Activated B cell treated with CpG ODN at 0.5 μM for 24 hours (primary cell): ENCODE measurements at regions of chr3 and their contacts with region 1.

Region 1: DNA sequence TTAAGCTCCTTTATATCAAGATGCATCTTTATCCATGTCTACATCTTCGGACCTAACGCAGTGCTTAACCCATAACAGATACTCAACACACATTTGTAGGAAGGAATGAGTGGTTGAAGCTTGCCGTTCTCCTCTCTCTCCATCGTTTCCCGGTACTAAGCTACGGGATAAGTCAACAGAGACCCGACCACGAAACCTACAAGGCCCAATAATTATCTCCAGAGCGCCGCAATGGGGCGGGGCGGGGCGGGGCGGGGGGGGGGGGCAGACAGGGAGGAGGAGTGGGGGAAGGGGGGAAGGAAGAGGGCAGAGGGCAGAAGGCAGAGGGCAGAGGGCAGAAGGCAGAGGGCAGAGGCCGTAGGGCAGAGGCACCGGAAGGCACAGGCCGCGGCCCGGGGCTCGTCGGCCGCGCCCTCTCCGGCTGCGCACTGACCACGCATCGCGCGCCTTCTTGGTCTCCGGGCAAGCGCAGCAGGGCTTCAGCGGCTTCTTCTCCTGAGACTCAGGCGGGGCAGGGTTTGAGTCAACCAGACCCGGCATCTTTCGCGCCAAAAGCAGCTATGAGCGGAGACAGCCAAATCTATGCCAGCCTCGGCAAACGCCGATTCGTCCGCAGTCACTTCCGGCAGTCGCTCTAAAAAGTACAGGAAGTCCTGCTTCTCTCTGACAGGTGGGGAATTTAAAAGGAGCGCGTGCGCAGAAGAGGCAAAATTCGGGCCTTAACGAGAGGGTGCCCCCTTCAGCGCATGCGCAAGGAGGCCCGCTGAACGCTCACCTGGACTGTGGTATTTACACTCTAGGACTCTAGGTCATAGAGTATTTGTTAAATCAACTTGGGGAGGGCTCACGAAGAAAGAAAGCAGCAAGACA is at the start of gene COX17:
- DNase-seq: peak; percentile 87
- ATAC-seq: peak; percentile 83
- H3K4me3 Mint-ChIP-seq: peak within 1 kb of the TSS; percentile 96
- H3K27ac Mint-ChIP-seq: peak within 1 kb of the TSS; percentile 98
- H3K4me1 Mint-ChIP-seq: peaks cover 28% of the 10 kb centered on the region
- H3K27me3 Mint-ChIP-seq: no peaks in the 10 kb centered on the region
- CTCF ChIP-seq: no peak
- total RNA-seq, gene COX17: 58.8 and 58.9 TPM in 2 replicates

Region 2: DNA sequence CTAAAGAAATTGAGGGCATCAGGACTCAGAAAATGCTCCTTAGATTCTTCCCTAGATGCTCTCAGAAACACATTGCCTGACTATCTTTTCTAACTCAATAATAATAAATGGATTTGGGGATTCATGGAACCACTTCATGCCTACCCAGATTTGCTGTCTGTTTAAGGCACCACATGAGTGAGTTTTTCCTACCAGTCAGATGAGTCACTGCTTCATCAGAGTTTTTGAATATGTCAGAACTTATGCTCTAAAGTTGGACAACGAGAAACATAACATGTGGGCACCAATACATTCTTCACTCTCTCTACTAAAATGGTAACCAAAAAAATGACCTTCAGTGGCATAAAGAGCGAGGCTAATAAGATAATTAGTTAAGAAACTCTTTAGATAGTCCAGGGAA is 1832.3 kb before region 1 on chr3:
- CTCF ChIA-PET with region 1: no interaction called
- POLR2A ChIA-PET with region 1: no interaction called
- intact Hi-C with region 1: no loop called
- DNase-seq: no peak
- ATAC-seq: no peak
- H3K4me3 Mint-ChIP-seq: no peak overlapping the region
- H3K27ac Mint-ChIP-seq: no peak overlapping the region
- H3K4me1 Mint-ChIP-seq: no peaks in the 10 kb centered on the region
- H3K27me3 Mint-ChIP-seq: no peaks in the 10 kb centered on the region
- CTCF ChIP-seq: no peak

Region 3: DNA sequence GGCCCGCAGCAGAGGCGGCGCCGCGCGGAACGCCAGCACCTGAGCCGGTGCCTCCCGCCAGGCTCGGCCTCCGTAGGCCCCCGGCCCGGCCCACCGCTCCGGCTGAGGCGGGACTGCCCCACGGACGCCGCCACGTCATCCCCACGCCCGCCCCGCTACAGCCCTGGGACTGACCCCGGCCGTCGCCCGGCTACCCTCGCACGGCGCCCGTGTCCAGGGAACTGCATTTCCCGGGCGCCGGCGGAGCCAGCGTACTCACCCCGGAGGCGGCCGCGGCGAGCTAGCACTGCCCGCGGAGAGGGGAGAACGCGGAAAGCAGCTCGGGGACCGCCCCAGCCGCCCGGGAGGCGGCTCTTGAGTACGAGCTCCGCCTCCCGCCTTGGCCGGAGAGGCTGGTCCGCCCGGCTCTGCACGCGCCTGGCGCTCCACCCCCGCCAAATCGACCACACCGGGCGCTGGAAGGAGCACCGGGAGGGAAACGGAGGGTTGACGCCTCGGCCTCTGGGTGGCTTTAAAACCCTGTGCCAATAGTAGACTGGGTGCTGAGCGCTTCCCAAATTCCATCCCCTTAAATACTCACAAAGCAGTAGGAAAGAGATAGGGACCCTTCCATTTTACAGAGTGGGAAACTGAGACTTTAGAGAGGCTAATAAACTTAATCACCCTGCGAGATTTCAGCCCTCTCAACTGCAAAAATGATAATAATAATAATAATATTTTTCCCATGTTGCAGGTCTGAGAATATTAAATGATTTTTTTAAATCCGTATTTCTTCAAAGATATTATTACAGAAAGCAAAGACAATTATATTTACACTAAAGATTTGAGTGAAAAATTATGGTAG is 436.2 kb before region 1 on chr3 and contains the start of gene B4GALT4:
- CTCF ChIA-PET with region 1: interaction called, 13 read pairs
- POLR2A ChIA-PET with region 1: interaction called, 3 read pairs
- intact Hi-C with region 1: no loop called
- DNase-seq: peak; percentile 78
- ATAC-seq: peak; percentile 86
- H3K4me3 Mint-ChIP-seq: peak within 1 kb of the TSS; percentile 87
- H3K27ac Mint-ChIP-seq: peak within 1 kb of the TSS; percentile 82
- H3K4me1 Mint-ChIP-seq: peaks cover 36% of the 10 kb centered on the region
- H3K27me3 Mint-ChIP-seq: no peaks in the 10 kb centered on the region
- CTCF ChIP-seq: no peak
- total RNA-seq, gene B4GALT4: 13.8 and 18.0 TPM in 2 replicates

Region 4: DNA sequence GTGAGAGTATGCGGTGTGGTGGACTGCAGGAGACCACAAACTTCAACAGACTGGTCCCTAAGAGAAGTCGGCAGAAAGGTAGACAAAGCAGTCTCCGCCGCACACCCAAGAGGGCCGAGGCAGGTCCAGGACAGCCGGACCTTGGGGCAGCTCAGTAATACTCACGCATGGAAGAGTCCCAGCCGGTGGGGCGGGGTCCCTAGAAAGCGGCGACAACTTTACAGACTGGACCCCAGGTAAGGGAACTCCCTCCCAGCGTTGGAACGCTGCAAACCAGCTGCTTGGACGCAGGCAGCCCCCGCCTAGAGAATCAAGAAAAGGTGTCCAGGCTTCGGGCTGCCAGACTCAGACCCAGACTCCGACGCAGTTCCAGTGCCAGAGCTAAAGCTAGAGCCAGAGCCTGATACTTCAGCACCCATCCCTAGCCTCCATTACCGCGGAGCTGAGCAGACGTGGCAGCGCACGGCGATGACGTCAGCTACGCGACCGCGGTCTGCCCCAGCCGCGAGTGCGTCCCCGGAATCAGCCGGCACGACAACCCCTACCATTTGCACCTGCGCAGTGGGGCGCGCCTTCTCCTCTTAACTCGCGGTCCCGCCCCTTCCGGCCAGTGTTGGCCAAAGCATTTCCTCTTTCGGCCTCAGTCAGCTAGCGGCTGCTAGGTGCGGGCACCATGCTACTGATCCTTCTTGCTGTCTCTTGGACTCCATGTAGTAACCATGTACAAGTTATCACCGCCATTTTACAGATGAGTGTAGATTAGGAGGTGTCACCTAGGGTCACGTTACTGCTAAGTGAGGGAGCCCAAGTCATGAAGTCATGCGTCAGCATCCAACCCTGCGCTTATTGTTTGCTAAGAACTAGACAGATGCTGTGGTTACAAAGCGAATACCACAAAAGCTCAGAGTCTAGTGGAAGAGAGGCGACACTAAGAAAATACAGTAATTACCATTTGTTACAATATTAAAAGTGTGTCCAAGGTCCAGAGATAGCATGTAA is 213.5 kb before region 1 on chr3 and contains the start of gene TMEM39A:
- CTCF ChIA-PET with region 1: interaction called, 8 read pairs
- POLR2A ChIA-PET with region 1: interaction called, 17 read pairs
- intact Hi-C with region 1: loop called (anchors 1 kb)
- DNase-seq: peak; percentile 99
- ATAC-seq: peak; percentile 88
- H3K4me3 Mint-ChIP-seq: peak within 1 kb of the TSS; percentile 98
- H3K27ac Mint-ChIP-seq: peak within 1 kb of the TSS; percentile 97
- H3K4me1 Mint-ChIP-seq: peaks cover 34% of the 10 kb centered on the region
- H3K27me3 Mint-ChIP-seq: no peaks in the 10 kb centered on the region
- CTCF ChIP-seq: no peak
- total RNA-seq, gene TMEM39A: 33.7 and 45.6 TPM in 2 replicates

Region 5: GRCh38 chr3:119559441-119559963 is 117.5 kb before region 1 on chr3 and contains the start of gene CD80:
- CTCF ChIA-PET with region 1: interaction called, 17 read pairs
- POLR2A ChIA-PET with region 1: interaction called, 28 read pairs
- intact Hi-C with region 1: loop called (anchors 1 kb)
- DNase-seq: peak; percentile 58
- ATAC-seq: peak; percentile 54
- H3K4me3 Mint-ChIP-seq: peak within 1 kb of the TSS; percentile 90
- H3K27ac Mint-ChIP-seq: peak within 1 kb of the TSS; percentile 88
- H3K4me1 Mint-ChIP-seq: peaks cover 92% of the 10 kb centered on the region
- H3K27me3 Mint-ChIP-seq: no peaks in the 10 kb centered on the region
- CTCF ChIP-seq: no peak
- total RNA-seq, gene CD80: 71.4 and 88.1 TPM in 2 replicates

Region 6: DNA sequence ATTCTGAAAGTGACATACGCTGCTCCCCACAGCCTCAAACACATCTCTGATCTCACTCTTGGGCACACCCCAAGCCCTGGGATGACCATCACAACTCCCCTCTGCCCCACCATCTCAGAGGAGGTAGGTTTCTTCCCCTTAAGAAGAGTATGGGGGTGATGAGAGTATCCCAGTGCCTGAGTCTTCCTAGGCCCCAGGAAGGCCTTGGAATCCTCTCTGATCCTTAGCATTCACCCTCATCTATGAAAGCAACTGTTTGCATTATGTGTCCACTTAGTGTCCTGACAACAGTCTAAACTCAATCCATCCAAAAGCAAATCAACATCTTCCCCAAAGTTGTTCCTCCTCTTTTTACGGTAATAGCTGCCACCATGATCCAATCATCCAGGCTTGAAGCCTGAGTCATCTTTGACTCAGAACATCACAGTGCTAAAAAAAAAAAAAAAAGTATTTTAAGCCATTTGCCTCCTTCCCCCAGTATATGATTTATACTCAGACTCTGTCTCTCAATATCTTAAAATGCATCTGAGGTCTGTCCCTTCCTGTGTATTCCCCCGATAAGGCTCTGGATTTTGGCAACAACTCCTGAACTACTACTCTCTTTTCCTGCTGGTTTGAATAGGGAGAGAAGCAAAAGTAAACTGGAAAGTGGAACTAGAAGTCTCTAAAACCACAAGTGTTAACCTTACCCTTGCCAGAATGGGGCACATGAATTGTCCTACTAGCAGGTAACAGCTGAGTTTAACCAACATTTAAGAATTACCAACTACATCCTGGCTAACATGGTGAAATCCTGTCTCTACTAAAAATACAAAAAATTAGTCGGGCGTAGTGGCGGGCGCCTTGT is 39.1 kb before region 1 on chr3:
- CTCF ChIA-PET with region 1: no interaction called
- POLR2A ChIA-PET with region 1: interaction called, 20 read pairs
- intact Hi-C with region 1: loop called (anchors 1 kb)
- DNase-seq: no peak
- ATAC-seq: peak; percentile 54
- H3K4me3 Mint-ChIP-seq: peak overlapping the region; percentile 78
- H3K27ac Mint-ChIP-seq: peak overlapping the region; percentile 98
- H3K4me1 Mint-ChIP-seq: peaks cover 44% of the 10 kb centered on the region
- H3K27me3 Mint-ChIP-seq: no peaks in the 10 kb centered on the region
- CTCF ChIP-seq: no peak

Region 7: GRCh38 chr3:120742198-120742849 is 1065.3 kb after region 1 on chr3 and contains the starts of genes GTF2E1 and RABL3:
- CTCF ChIA-PET with region 1: no interaction called
- POLR2A ChIA-PET with region 1: no interaction called
- intact Hi-C with region 1: loop called (anchors 5 kb)
- DNase-seq: peak; percentile 88
- ATAC-seq: peak; percentile 96
- H3K4me3 Mint-ChIP-seq: peak within 1 kb of the TSS; percentile 96
- H3K27ac Mint-ChIP-seq: peak within 1 kb of the TSS; percentile 97
- H3K4me1 Mint-ChIP-seq: peaks cover 36% of the 10 kb centered on the region
- H3K27me3 Mint-ChIP-seq: no peaks in the 10 kb centered on the region
- CTCF ChIP-seq: no peak
- total RNA-seq, gene GTF2E1: 22.1 and 22.9 TPM in 2 replicates
- total RNA-seq, gene RABL3: 29.7 and 29.9 TPM in 2 replicates